ENCODE measurements at regions of chr7 and their contacts with region 1.

Region 1: GRCh38 chr7:75727881-75728592 is 10.7 kb downstream of the HIP1 start:
- DNase-seq: peak in 31 of 35 experiments; percentile 6 to 79 (median 39)
- ATAC-seq: peak; percentile 82 to 86 (median 84)
- H3K4me3 ChIP-seq: peak overlapping the region; percentile 11 to 19
- H3K4me3 Mint-ChIP-seq: peak overlapping the region; percentile 41 to 50 (median 49)
- H3K27ac ChIP-seq: peak overlapping the region; percentile 75
- H3K27ac Mint-ChIP-seq: peak overlapping the region; percentile 88 to 93
- H3K4me1 ChIP-seq: peaks cover 6 to 43% of the 10 kb centered on the region in 2 experiments
- H3K4me1 Mint-ChIP-seq: peaks cover 17 to 43% (median 23%) of the 10 kb centered on the region in 3 donors
- H3K27me3 ChIP-seq: no peaks in the 10 kb centered on the region
- H3K27me3 Mint-ChIP-seq: no peaks in the 10 kb centered on the region

Region 2: GRCh38 chr7:75711656-75712514 is 16.2 kb before region 1 on chr7:
- CTCF ChIA-PET with region 1: no interaction called
- POLR2A ChIA-PET with region 1: no interaction called
- DNase-seq: no peak
- ATAC-seq: no peak
- H3K4me3 ChIP-seq: no peak overlapping the region
- H3K4me3 Mint-ChIP-seq: no peak overlapping the region
- H3K27ac ChIP-seq: no peak overlapping the region
- H3K27ac Mint-ChIP-seq: no peak overlapping the region
- H3K4me1 ChIP-seq: no peaks in the 10 kb centered on the region
- H3K4me1 Mint-ChIP-seq: peaks cover 10 to 17% (median 11%) of the 10 kb centered on the region in 3 donors
- H3K27me3 ChIP-seq: no peaks in the 10 kb centered on the region
- H3K27me3 Mint-ChIP-seq: peaks cover 0 to 6% of the 10 kb centered on the region in 2 donors

Region 3: GRCh38 chr7:75762314-75762917 is 34.4 kb after region 1 on chr7:
- CTCF ChIA-PET with region 1: interaction called, 4 to 10 read pairs
- POLR2A ChIA-PET with region 1: interaction called in 1 of 2 experiments, 3 read pairs
- DNase-seq: peak in 1 of 35 experiments; percentile 65
- ATAC-seq: peak; percentile 79 to 84 (median 83)
- H3K4me3 ChIP-seq: no peak overlapping the region
- H3K4me3 Mint-ChIP-seq: no peak overlapping the region
- H3K27ac ChIP-seq: no peak overlapping the region
- H3K27ac Mint-ChIP-seq: no peak overlapping the region
- H3K4me1 ChIP-seq: no peaks in the 10 kb centered on the region
- H3K4me1 Mint-ChIP-seq: peaks cover 3 to 5% (median 4%) of the 10 kb centered on the region in 3 donors
- H3K27me3 ChIP-seq: peaks cover 0 to 5% of the 10 kb centered on the region in 2 experiments
- H3K27me3 Mint-ChIP-seq: no peaks in the 10 kb centered on the region

Region 4: GRCh38 chr7:76047305-76047810 is 319.3 kb after region 1 on chr7:
- CTCF ChIA-PET with region 1: no interaction called
- POLR2A ChIA-PET with region 1: interaction called in 1 of 2 experiments, 10 read pairs
- DNase-seq: peak in 7 of 35 experiments; percentile 1 to 33 (median 9)
- ATAC-seq: peak in 3 of 4 experiments; percentile 6 to 25 (median 10)
- H3K4me3 ChIP-seq: peak overlapping the region; percentile 74 to 96
- H3K4me3 Mint-ChIP-seq: peak overlapping the region; percentile 94 to 99 (median 99)
- H3K27ac ChIP-seq: peak overlapping the region; percentile 75
- H3K27ac Mint-ChIP-seq: peak overlapping the region; percentile 97
- H3K4me1 ChIP-seq: peaks cover 5 to 57% of the 10 kb centered on the region in 2 experiments
- H3K4me1 Mint-ChIP-seq: peaks cover 42 to 62% (median 53%) of the 10 kb centered on the region in 3 donors
- H3K27me3 ChIP-seq: no peaks in the 10 kb centered on the region
- H3K27me3 Mint-ChIP-seq: no peaks in the 10 kb centered on the region